RWPE1 (cell line): ENCODE measurements at regions of chr17 and their contacts with region 1.

Region 1: GRCh38 chr17:44293509-44294226 is 14.7 kb upstream of the RUNDC3A start:
- DNase-seq: no peak
- H3K27ac ChIP-seq: no peak overlapping the region
- CTCF ChIP-seq: no peak

Region 2: DNA sequence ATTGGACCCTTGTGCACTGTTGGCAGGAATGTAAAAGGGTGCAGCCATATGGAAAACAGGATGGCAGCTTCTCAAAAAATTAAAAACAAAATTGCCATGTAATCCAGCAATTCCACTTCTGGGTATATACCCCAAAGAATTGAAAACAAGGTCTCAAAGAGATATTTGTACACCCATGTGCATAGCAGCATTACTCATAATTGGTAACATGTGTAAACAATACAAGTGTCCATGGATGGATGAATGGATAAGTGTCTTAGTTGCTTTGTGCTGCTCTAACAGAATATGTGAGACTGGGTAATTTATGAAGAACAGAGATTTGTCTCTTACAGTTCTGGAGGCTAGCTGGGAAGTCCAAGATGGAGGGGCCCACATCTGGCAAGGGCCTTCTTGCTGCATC is 11.0 kb after region 1 on chr17:
- CTCF ChIA-PET with region 1: no interaction called
- POLR2A ChIA-PET with region 1: interaction called, 10 read pairs
- DNase-seq: no peak
- H3K27ac ChIP-seq: no peak overlapping the region
- CTCF ChIP-seq: no peak